ENCODE measurements at regions of chr2 and their contacts with region 1.

Region 1: GRCh38 chr2:167028505-167028904 is 140.2 kb downstream of the XIRP2 start:
- DNase-seq: no peak
- ATAC-seq: no peak
- H3K4me3 Mint-ChIP-seq: no peak overlapping the region
- H3K27ac Mint-ChIP-seq: no peak overlapping the region
- H3K4me1 Mint-ChIP-seq: no peaks in the 10 kb centered on the region
- H3K27me3 Mint-ChIP-seq: no peaks in the 10 kb centered on the region
- CTCF ChIP-seq: no peak

Region 2: DNA sequence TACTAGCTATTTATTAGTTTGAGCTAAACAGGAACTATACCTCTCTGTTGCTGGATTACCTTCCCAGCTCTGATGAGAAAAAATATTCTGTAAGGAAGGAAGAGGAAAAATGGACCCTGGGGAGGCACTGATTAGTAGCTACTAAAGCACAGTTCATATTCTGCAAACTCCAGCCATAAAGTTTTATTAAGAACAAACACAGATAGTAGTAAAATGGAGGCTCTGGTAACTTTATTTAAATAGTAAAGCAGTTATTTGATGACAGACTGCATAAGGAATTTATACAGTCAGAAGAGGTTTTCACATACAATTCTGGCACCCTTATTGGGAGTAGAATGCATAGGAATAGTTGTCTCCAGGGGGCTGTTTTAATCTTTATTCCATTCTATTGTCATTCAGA is 56.1 kb before region 1 on chr2:
- CTCF ChIA-PET with region 1: no interaction called
- POLR2A ChIA-PET with region 1: no interaction called
- intact Hi-C with region 1: loop called (anchors 10 kb)
- DNase-seq: no peak
- ATAC-seq: no peak
- H3K4me3 Mint-ChIP-seq: no peak overlapping the region
- H3K27ac Mint-ChIP-seq: no peak overlapping the region
- H3K4me1 Mint-ChIP-seq: no peaks in the 10 kb centered on the region
- H3K27me3 Mint-ChIP-seq: no peaks in the 10 kb centered on the region
- CTCF ChIP-seq: no peak

Region 3: GRCh38 chr2:168060986-168061750 is 1032.7 kb after region 1 on chr2:
- CTCF ChIA-PET with region 1: no interaction called
- POLR2A ChIA-PET with region 1: no interaction called
- intact Hi-C with region 1: no loop called
- DNase-seq: no peak
- ATAC-seq: no peak
- H3K4me3 Mint-ChIP-seq: no peak overlapping the region
- H3K27ac Mint-ChIP-seq: no peak overlapping the region
- H3K4me1 Mint-ChIP-seq: no peaks in the 10 kb centered on the region
- H3K27me3 Mint-ChIP-seq: no peaks in the 10 kb centered on the region
- CTCF ChIP-seq: no peak